K562 (cell line): ENCODE measurements at regions of chr14 and their contacts with region 1.

Region 1: GRCh38 chr14:49633640-49634546 is 1.2 kb downstream of the DNAAF2 start:
- DNase-seq: peak; percentile 79 to 94 (median 84)
- ATAC-seq: peak; percentile 83
- H3K4me3 ChIP-seq: peak overlapping the region; percentile 91
- H3K27ac ChIP-seq: peak overlapping the region; percentile 99
- H3K4me1 ChIP-seq: peaks cover 8 to 20% of the 10 kb centered on the region in 2 experiments; a peak in 4 of 5 replicates
- H3K27me3 ChIP-seq: no peaks in the 10 kb centered on the region
- CTCF ChIP-seq: peak; percentile 64 to 84 (median 76); a peak in 5 of 6 replicates
- EP300 ChIP-seq: no peak
- POLR2A ChIP-seq: peak; percentile 91
- RAD21 ChIP-seq: peak; percentile 65 to 68

Region 2: GRCh38 chr14:49585803-49586672 is 47.9 kb before region 1 on chr14 and contains the start of gene RPS29:
- CTCF ChIA-PET with region 1: no interaction called
- POLR2A ChIA-PET with region 1: interaction called, 4 read pairs
- in situ Hi-C with region 1: no loop called
- intact Hi-C with region 1: loop called (anchors 2 kb)
- DNase-seq: peak; percentile 80 to 97 (median 86)
- ATAC-seq: peak; percentile 83
- H3K4me3 ChIP-seq: peak within 1 kb of the TSS; percentile 82
- H3K27ac ChIP-seq: peak within 1 kb of the TSS; percentile 92
- H3K4me1 ChIP-seq: peaks cover 12% of the 10 kb centered on the region in 2 experiments; a peak in 4 of 5 replicates
- H3K27me3 ChIP-seq: no peaks in the 10 kb centered on the region
- CTCF ChIP-seq: no peak
- EP300 ChIP-seq: no peak
- POLR2A ChIP-seq: peak; percentile 99
- RAD21 ChIP-seq: no peak
- polyA plus RNA-seq, gene RPS29: 3,039 to 3,940 TPM

Region 3: GRCh38 chr14:49620182-49621113 is 13.4 kb before region 1 on chr14 and contains the starts of genes MGAT2 and RPL36AL:
- CTCF ChIA-PET with region 1: no interaction called
- POLR2A ChIA-PET with region 1: interaction called, 36 read pairs
- in situ Hi-C with region 1: no loop called
- intact Hi-C with region 1: no loop called
- DNase-seq: peak; percentile 91 to 97 (median 94)
- ATAC-seq: peak; percentile 90
- H3K4me3 ChIP-seq: peak within 1 kb of the TSS; percentile 89
- H3K27ac ChIP-seq: peak within 1 kb of the TSS; percentile 98
- H3K4me1 ChIP-seq: peaks cover 4 to 14% of the 10 kb centered on the region in 2 experiments; a peak in 4 of 5 replicates
- H3K27me3 ChIP-seq: no peaks in the 10 kb centered on the region
- CTCF ChIP-seq: peak; percentile 5 to 35 (median 24); a peak in 2 of 6 replicates
- EP300 ChIP-seq: peak; percentile 26
- POLR2A ChIP-seq: peak; percentile 96
- RAD21 ChIP-seq: 0 out of 4 replicates have a peak, but pooled peaks of 1 of the 2 experiments have one; percentile 5
- polyA plus RNA-seq, gene MGAT2: 0.03 TPM in 1 of 2 experiments, not detected in the other
- polyA plus RNA-seq, gene RPL36AL: 625 to 674 TPM

Region 4: GRCh38 chr14:49767562-49768300 is 133.8 kb after region 1 on chr14 and contains the start of gene KLHDC2:
- CTCF ChIA-PET with region 1: no interaction called
- POLR2A ChIA-PET with region 1: interaction called, 25 read pairs
- in situ Hi-C with region 1: no loop called
- intact Hi-C with region 1: loop called (anchors 5 kb)
- DNase-seq: peak; percentile 72 to 88 (median 74)
- ATAC-seq: peak; percentile 89
- H3K4me3 ChIP-seq: peak within 1 kb of the TSS; percentile 93
- H3K27ac ChIP-seq: peak within 1 kb of the TSS; percentile 99
- H3K4me1 ChIP-seq: peaks cover 17 to 20% of the 10 kb centered on the region in 2 experiments; a peak in 4 of 5 replicates
- H3K27me3 ChIP-seq: no peaks in the 10 kb centered on the region
- CTCF ChIP-seq: peak in 2 of 3 experiments; percentile 24 to 59; a peak in 2 of 6 replicates
- EP300 ChIP-seq: no peak
- POLR2A ChIP-seq: peak; percentile 54; the same call in 1 of the 2 replicates
- RAD21 ChIP-seq: no peak
- polyA plus RNA-seq, gene KLHDC2: 6.3 to 7.8 TPM

Region 5: DNA sequence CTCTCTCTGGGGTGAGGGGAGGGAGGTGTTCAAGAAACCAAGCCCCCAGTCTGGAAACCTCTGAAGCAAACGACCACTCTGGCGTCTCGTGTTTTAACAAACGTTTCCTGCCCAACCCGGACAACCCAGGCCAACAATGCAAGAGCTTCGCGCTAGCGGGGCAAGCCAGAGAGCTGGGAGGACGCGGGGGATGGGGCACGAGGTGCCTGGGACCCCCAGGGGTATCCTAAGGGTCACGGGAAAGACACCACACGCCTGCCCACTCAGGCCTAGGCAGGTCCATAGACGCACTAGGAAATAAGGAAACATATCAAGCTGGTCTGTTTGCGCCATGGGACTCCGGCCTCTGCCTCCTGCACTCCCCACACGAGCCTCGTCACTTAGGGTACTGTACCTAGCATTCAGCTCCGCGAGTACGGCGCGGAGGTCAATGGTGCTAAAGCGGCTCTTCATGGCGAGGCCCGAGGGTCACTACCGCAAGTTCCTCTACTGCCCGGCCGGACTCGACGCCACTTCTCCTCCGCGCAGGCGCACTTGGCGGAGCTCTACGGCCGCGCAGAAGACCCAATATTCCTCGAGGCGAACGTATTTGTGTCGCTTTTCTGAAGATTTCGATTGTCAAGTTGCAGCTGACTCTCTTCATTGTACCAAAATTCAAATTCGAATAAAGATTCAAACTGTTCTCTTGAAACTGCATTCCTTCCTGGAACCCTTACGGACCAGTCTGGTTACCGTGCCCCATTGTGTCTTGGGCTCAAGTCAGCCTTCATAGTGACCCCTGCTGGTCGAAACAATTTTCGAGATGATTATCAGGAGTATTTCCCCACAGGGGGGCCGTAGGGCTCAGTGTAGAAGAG is 218.6 kb after region 1 on chr14 and contains the start of gene NEMF:
- CTCF ChIA-PET with region 1: no interaction called
- POLR2A ChIA-PET with region 1: interaction called, 7 read pairs
- in situ Hi-C with region 1: no loop called
- intact Hi-C with region 1: loop called (anchors 5 kb)
- DNase-seq: peak; percentile 65 to 89 (median 73)
- ATAC-seq: peak; percentile 88
- H3K4me3 ChIP-seq: peak within 1 kb of the TSS; percentile 84
- H3K27ac ChIP-seq: peak within 1 kb of the TSS; percentile 85
- H3K4me1 ChIP-seq: peaks cover 2 to 4% of the 10 kb centered on the region in 2 experiments; a peak in 4 of 5 replicates
- H3K27me3 ChIP-seq: no peaks in the 10 kb centered on the region; a peak in 1 of 5 replicates
- CTCF ChIP-seq: peak; percentile 73 to 81 (median 74)
- EP300 ChIP-seq: no peak
- POLR2A ChIP-seq: peak; percentile 92
- RAD21 ChIP-seq: peak in 1 of 2 experiments; percentile 31; a peak in 2 of 4 replicates
- polyA plus RNA-seq, gene NEMF: 38.8 to 73.2 TPM